MCF 10A (cell line): ENCODE measurements at regions of chr2 and their contacts with region 1.

Region 1: GRCh38 chr2:61144697-61145268 is 17.2 kb upstream of the C2orf74 start:
- DNase-seq: peak; percentile 98
- H3K4me3 Mint-ChIP-seq: peak overlapping the region; percentile 78
- H3K27ac Mint-ChIP-seq: peak overlapping the region; percentile 84
- H3K4me1 Mint-ChIP-seq: no peaks in the 10 kb centered on the region
- H3K27me3 Mint-ChIP-seq: no peaks in the 10 kb centered on the region
- CTCF ChIP-seq: no peak

Region 2: DNA sequence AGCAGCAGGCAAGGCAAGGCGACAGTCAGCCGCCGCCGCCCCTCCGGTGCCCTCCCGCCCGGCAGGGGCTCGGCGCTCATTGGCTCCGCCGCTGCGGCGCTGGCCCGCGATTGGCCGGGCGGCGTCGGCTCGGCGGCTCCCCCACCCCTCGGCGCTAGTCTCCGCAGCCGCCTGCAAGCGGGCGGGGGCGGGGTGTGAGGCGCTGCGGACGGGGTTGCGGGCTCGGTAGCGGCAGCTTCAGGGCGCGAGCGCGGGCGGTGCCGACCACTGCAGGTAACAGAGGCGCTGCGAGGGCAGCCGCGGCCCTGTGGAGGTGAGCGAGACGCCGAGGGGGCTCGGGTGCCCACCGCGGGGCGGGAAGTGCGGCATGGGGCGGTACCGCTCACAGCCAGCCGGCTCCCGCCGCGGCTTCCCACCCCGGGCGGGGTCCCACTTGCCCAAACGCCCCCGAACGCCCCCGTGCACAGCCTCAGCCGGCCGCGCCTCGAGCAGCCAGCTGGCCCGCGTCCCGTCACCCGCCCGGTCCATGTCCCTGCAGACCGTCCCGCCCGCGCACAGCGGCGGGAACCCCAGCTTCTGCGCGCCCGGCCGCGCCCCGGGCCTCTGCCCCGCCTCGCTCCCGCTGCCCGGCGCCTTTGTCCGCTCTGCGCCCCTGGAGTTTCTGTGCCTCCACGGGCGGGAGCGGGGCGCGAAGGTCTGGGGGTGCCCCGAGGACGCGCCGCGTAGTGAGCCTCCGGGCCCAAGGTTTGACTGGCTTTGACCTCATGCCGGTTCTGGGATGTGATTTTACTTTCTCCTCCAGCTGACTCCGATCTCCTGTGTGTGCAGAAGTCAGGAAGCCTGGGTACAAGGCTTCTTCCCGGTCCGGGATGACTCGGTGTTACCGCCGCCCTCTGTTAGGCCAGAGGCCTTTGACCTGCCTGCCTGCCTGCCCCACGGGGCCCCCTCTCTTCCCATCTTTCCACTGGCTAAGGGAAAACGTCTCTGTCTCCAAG is 78.8 kb before region 1 on chr2 and contains the start of gene SANBR:
- CTCF ChIA-PET with region 1: no interaction called
- POLR2A ChIA-PET with region 1: interaction called, 11 read pairs
- intact Hi-C with region 1: no loop called
- DNase-seq: peak; percentile 82
- H3K4me3 Mint-ChIP-seq: peak within 1 kb of the TSS; percentile 89
- H3K27ac Mint-ChIP-seq: peak within 1 kb of the TSS; percentile 61
- H3K4me1 Mint-ChIP-seq: no peaks in the 10 kb centered on the region
- H3K27me3 Mint-ChIP-seq: no peaks in the 10 kb centered on the region
- CTCF ChIP-seq: no peak
- total RNA-seq, gene SANBR: 5.2 and 8.3 TPM in 2 replicates